AG04449 (cell line): ENCODE measurements at regions of chr1 and their contacts with region 1.

Region 1: GRCh38 chr1:58515794-58516401 is 30.6 kb downstream of the OMA1 start:
- DNase-seq: peak; percentile 41
- H3K4me3 ChIP-seq: no peak overlapping the region
- CTCF ChIP-seq: peak; percentile 39

Region 2: DNA sequence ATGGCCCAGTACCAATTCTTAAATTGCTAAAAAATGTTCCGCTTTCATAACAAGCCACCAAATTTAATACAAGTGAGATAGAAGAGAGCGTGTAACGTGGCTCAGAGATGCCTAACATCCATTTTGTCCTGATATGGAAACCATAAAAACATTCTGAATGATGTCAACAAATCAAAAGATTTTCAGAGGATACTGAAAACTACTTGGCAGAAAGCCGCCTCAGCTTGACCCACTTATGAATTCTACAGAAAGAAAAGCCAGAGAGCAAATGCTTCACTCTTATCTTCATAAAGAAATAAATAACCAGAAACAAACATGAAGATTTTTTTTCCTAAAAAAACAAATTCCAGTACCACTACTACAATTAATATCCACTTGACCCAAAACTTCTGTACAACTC is 10.6 kb before region 1 on chr1:
- CTCF ChIA-PET with region 1: interaction called, 16 read pairs
- POLR2A ChIA-PET with region 1: no interaction called
- DNase-seq: no peak
- H3K4me3 ChIP-seq: no peak overlapping the region
- CTCF ChIP-seq: no peak

Region 3: DNA sequence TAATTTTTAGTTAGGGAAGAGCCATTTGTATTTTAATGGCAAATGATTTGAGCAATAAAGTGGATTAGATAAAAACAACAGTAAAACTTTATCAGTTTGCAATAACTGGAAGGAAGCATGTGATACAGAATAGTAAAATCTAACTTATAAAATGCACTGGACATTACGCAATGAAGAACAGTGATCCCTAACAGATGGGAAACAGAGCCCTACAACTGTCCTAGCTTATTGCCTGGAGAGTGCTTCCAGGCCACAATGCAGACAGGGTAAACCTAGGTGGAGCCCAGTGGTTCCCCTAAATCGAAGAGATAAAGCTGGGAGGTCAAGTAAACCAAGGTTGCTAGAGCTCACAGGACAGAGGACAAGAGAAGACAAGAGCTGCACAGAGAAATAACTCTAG is 23.7 kb after region 1 on chr1:
- CTCF ChIA-PET with region 1: interaction called, 48 read pairs
- POLR2A ChIA-PET with region 1: no interaction called
- DNase-seq: no peak
- H3K4me3 ChIP-seq: no peak overlapping the region
- CTCF ChIP-seq: no peak

Region 4: DNA sequence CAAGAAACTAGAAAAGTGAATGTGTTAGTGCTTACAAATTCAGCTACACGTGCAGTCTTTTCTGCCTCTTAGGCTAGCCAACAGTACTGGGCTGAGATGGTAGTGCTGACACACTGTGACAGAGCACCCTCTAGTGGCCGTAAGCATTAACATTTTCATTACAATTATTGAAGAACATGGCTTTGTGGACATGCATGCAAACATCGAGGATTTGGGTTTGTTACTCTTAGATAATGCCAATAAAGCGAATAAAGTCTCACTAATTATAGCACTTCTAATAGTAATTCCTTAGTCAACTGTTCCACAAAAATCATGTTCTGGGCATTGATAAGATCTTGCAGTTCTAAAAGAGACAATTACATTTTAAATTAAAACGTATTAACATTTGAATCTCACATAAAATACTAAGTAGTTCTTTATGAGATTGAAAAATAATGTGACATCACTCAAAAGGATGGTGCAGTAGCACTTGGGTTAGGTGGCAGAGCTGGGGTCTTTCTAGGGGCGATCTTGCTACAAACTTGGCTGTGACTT is 136.8 kb after region 1 on chr1:
- CTCF ChIA-PET with region 1: interaction called, 441 read pairs
- POLR2A ChIA-PET with region 1: no interaction called
- DNase-seq: peak; percentile 33
- H3K4me3 ChIP-seq: no peak overlapping the region
- CTCF ChIP-seq: peak; percentile 74

Region 5: DNA sequence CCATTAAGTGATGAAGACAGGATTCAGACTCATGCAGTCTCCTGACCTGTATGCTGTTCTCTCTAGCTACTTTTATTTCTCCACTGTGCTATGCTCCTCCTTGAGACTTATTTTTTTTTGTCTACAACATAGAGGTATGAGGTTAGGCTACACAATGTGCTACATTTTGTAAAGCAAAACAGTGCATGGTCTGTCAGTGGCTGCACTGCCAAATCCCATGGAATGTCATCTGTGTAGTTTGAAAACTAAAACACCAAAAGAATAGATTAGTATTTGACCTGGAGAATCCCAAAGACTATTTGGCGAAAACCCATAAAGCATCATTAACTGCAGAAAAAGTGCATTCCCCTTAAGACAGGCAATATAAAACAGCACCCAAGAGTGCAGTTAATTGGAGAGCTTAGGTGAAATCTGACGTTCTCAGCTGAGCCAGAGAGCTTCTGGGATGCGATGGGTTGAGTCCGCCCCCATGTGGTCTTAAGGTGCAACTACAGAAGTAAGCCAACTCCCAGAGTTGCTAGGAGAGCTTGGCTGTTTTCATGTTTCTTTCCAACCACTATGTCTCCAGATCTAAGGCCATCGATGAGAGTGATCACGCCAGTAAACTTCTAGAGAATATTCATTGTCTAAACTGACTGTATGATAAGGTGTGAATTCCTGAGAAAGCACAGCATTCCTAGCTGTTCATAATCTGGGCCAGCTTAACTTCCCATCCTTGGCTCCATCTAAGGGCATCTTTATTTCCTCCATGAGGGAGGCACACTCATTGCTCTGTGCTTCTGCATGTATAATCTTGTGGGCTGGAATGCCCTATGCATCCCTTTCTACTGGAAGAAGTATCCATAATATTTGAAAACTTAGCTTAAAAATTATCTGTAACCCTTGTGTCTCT is 1431.4 kb after region 1 on chr1:
- CTCF ChIA-PET with region 1: interaction called, 10 read pairs
- POLR2A ChIA-PET with region 1: no interaction called
- DNase-seq: peak; percentile 9
- H3K4me3 ChIP-seq: no peak overlapping the region
- CTCF ChIP-seq: peak; percentile 96